Common myeloid progenitor, CD34-positive (primary cell): ENCODE measurements at regions of chr15 and their contacts with region 1.

Region 1: GRCh38 chr15:40769274-40770146 is at the start of gene C15orf62:
- DNase-seq: peak; percentile 86 to 97 (median 94)
- H3K4me3 ChIP-seq: peak within 1 kb of the TSS in 5 of 7 experiments; percentile 21 to 63 (median 53)
- H3K27ac ChIP-seq: peak within 1 kb of the TSS; percentile 40 to 65
- H3K4me1 ChIP-seq: peaks cover 4 to 64% (median 52%) of the 10 kb centered on the region in 4 experiments
- H3K27me3 ChIP-seq: no peaks in the 10 kb centered on the region

Region 2: GRCh38 chr15:40743921-40744814 is 25.3 kb before region 1 on chr15:
- CTCF ChIA-PET with region 1: interaction called, 12 read pairs
- POLR2A ChIA-PET with region 1: no interaction called
- DNase-seq: peak in 1 of 3 donors; percentile 26
- H3K4me3 ChIP-seq: no peak overlapping the region
- H3K27ac ChIP-seq: peak overlapping the region in 1 of 2 experiments; percentile 34
- H3K4me1 ChIP-seq: peaks cover 0 to 35% (median 32%) of the 10 kb centered on the region in 4 experiments
- H3K27me3 ChIP-seq: no peaks in the 10 kb centered on the region

Region 3: DNA sequence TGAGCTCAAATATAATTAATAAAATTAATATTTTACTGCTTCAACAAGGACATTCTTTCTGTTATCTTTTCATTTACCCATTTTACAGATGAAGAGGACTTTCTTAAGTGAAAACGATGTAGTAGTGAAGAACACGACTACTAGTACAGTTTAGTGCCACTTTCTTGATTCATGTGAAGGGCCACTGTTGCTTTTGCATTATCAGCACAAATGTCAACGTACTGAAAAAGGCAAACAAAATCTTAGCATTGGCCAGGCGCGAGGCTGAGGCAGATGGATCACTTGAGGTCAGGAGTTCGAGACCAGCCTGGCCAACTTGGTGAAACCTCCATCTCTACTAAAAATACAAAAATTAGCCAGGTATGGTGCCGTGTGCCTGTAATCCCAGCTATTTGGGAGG is 49.5 kb after region 1 on chr15:
- CTCF ChIA-PET with region 1: no interaction called
- POLR2A ChIA-PET with region 1: no interaction called
- DNase-seq: no peak
- H3K4me3 ChIP-seq: no peak overlapping the region
- H3K27ac ChIP-seq: no peak overlapping the region
- H3K4me1 ChIP-seq: no peaks in the 10 kb centered on the region
- H3K27me3 ChIP-seq: no peaks in the 10 kb centered on the region

Region 4: GRCh38 chr15:40982855-40983254 is 213.3 kb after region 1 on chr15:
- CTCF ChIA-PET with region 1: no interaction called
- POLR2A ChIA-PET with region 1: no interaction called
- DNase-seq: no peak
- H3K4me3 ChIP-seq: no peak overlapping the region
- H3K27ac ChIP-seq: no peak overlapping the region
- H3K4me1 ChIP-seq: no peaks in the 10 kb centered on the region
- H3K27me3 ChIP-seq: no peaks in the 10 kb centered on the region